GM23248 (cell line): ENCODE measurements at regions of chr16 and their contacts with region 1.

Region 1: DNA sequence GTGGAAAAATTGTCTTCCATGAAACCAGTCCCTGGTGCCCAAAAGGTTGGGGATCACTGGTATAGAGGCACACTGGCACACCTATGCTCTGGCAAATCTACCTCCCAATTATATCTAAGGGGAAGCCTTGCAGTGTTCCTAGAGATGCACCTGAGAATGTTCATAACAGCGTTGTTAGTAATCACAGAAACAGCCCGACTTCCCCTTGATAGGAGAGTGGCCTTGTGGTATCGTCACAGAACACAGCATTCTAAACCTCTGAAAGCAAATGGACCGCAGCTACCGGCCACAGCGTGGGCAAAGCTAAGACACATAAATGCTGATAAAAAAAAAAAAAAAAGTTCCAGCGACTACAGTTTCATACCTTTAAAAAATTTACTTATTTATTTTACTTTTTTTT is 39.1 kb upstream of the ADGRG1 start:
- DNase-seq: no peak
- H3K4me3 ChIP-seq: no peak overlapping the region
- H3K27ac ChIP-seq: no peak overlapping the region
- H3K4me1 ChIP-seq: peaks cover 20% of the 10 kb centered on the region
- H3K27me3 ChIP-seq: no peaks in the 10 kb centered on the region

Region 2: DNA sequence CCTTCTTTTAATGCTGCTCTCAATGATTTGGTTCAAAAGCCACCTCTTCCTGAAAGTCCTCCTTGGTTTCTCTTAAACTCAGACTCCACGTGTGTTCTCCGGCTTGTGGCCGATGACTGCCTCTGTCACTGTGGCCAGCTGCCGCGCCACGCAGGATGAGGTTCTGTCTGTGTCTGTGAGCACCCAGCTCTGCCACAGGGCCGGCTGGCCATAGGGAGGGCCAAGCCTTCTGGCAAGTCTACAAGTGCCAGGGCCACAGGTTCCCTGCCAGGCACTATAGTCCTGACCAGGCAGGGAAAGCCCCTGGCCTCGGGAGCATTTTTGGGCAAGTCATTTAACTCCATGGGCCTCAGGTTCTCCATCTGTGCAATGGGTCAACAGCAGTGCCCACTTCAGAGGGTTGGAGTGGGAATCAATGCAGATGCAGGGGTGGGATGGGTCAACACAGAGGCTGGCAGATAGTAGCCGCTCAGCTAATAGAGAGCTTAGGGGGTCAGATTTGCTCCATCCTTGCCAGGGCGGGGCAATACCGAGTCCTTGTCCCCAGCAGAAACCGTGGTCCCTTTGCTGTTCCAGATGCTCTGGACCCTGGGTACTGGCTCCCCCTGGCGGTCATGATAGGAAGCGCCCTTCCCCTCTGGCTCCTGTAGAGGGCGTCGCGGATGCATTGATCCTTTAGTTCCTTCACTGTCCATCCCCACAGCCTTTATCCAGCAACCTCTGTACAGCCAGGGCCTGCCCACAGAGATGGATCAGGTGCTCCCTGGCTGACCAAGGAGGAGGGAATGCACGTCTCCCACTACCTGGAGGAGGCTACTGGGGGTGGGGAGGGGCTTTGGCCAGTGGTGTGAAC is 59.4 kb after region 1 on chr16:
- in situ Hi-C with region 1: no loop called
- DNase-seq: peak; percentile 83
- H3K4me3 ChIP-seq: no peak overlapping the region
- H3K27ac ChIP-seq: no peak overlapping the region
- H3K4me1 ChIP-seq: peaks cover 14% of the 10 kb centered on the region
- H3K27me3 ChIP-seq: no peaks in the 10 kb centered on the region

Region 3: DNA sequence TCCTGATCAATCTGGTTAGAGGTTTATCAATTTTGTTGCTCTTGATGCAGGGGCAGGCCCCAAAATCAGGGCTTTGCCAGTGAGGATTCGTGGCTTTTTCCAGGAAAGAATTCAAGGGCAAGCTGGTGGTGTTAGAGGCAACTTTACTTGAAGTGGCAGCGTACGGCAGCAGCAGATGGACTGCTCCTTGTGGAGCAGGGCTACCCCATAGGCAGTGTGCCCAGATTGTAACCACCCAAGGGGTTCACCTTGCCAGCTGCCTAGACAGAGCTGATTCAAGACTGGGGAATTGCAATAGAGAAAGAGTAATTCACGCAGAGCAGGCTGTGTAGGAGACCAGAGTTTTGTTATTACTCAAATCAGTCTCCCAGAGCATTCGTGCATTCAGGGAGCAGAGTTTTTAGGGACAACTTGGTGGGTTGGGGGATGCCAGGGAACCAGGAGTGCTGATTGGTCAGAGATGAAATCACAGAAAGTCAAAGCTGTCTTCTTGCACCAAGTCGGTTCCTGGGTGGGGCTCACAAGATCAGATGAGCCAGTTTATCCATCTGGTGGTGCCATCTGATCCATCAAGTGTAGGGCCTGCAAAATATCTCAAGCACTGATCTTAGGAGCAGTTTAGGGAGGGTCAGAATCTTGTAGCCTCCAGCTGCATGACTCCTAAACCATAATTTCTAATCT is 122.1 kb after region 1 on chr16:
- in situ Hi-C with region 1: loop called (anchors 10 kb)
- DNase-seq: no peak
- H3K4me3 ChIP-seq: no peak overlapping the region
- H3K27ac ChIP-seq: no peak overlapping the region
- H3K4me1 ChIP-seq: no peaks in the 10 kb centered on the region
- H3K27me3 ChIP-seq: peaks cover 69% of the 10 kb centered on the region